Keratinocyte (primary cell): ENCODE measurements at regions of chr2 and their contacts with region 1.

Region 1: DNA sequence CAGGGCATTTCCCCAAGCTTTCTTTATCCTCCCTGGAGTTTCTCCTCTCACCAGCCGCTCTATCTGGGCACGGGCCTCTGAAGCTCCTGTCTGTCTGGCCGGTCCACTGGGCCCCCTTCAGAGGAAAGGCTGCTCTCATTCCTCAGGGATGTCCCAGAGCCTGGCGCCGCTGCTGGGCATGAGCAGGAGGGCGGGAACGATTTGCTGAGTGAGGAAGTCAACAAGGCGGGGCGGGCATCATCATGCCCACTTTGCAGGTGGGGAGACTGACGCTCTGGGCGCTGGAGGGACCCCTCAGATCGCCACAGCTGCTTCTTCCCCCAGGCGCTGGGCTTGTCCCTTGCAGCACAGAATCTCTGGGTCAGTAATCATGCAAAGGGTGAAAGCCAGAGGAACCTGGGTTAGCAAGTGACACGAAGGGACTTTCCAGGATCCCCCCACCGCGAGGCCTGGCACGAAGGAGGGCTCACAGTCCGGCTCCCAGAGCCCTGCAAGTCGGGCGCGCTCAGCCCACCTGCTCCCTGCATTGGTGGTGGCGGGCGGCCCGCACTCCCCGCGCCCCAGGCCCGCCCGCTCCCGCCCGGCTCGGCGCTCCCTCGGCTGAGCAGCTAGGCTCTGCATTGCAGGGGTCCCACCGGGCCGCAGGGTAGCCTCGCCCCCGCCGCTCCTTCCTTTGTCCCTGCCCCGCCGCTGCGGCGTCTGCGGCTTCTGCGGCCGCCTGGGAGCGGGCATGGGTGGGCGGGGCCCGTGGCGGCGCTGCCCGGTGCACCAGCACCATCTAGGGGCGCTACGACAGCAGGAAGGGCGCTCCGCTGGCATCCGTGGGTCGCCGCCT is 157.8 kb downstream of the CYRIA start:
- DNase-seq: no peak
- H3K4me3 ChIP-seq: no peak overlapping the region
- H3K27ac ChIP-seq: no peak overlapping the region
- H3K4me1 ChIP-seq: no peaks in the 10 kb centered on the region
- H3K27me3 ChIP-seq: peaks cover 31% of the 10 kb centered on the region
- CTCF ChIP-seq: peak; percentile 30 to 86 (median 83)

Region 2: DNA sequence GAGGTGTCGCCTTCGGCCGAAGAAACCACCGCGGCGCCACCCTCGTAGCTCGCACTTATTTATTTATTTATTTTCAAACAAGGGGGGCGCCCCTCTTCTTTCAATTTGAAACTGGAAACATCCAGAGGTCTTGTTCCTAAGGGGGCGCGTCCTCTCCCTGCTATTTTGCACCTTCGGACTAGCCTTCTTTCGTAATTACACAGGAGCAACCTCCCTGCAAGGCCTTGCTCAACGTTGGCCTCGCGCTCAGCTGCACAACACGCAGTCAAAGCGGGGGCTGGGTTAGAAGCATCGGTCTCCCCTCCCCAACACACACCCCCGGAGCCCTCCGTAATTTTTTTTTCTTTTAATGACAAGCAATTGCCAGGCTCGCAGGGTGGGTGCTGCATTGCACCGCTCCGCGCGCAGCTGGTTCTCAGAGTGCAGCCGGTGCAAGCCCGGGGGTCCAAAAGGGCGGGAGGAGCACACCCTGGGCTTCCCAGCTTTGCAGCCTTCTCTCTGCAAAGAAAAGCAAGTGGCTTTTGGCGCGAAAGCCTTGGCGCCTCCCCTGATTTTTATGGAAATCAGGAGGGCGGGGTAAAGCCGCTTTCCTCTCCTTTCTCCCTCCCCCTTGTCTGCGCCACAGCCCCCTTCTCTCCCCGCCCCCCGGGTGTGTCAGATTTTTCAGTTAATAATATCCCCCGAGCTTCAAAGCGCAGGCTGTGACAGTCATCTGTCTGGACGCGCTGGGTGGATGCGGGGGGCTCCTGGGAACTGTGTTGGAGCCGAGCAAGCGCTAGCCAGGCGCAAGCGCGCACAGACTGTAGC is 567.8 kb before region 1 on chr2 and contains the start of gene MYCN:
- dilution Hi-C with region 1: loop called (anchors 25 kb)
- DNase-seq: no peak
- H3K4me3 ChIP-seq: peak within 1 kb of the TSS in 1 of 3 experiments; percentile 42
- H3K27ac ChIP-seq: no peak within 1 kb of the TSS
- H3K4me1 ChIP-seq: peaks cover 2% of the 10 kb centered on the region
- H3K27me3 ChIP-seq: peaks cover 44% of the 10 kb centered on the region
- CTCF ChIP-seq: no peak
- polyA plus RNA-seq, gene MYCN: 0.18 TPM in 1 of 3 replicates, not detected in the others

Region 3: DNA sequence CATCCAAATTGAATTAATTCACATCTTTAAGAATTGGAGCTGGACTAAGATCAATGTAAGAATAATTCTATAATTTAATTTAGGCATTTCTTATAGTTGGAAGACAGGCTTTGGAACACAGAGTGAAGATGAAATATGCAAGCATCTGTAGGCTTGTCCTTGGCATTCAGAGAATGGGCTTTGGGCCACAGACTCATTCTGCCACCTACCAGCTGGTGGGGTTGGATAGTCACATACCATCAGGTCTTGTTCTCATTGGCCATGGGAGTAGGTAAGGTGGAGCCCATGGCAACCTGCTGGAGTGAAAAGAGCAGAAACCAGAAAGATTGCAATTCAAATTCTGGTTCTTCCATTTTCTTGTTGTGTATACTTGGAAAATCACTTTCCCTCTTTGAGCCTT is 142.5 kb before region 1 on chr2:
- dilution Hi-C with region 1: no loop called
- DNase-seq: no peak
- H3K4me3 ChIP-seq: no peak overlapping the region
- H3K27ac ChIP-seq: no peak overlapping the region
- H3K4me1 ChIP-seq: no peaks in the 10 kb centered on the region
- H3K27me3 ChIP-seq: no peaks in the 10 kb centered on the region
- CTCF ChIP-seq: no peak

Region 4: GRCh38 chr2:16462958-16463357 is 44.9 kb before region 1 on chr2:
- dilution Hi-C with region 1: no loop called
- DNase-seq: no peak
- H3K4me3 ChIP-seq: no peak overlapping the region
- H3K27ac ChIP-seq: no peak overlapping the region
- H3K4me1 ChIP-seq: no peaks in the 10 kb centered on the region
- H3K27me3 ChIP-seq: no peaks in the 10 kb centered on the region
- CTCF ChIP-seq: no peak